ENCODE measurements at regions of chr11 and their contacts with region 1.

Region 1: DNA sequence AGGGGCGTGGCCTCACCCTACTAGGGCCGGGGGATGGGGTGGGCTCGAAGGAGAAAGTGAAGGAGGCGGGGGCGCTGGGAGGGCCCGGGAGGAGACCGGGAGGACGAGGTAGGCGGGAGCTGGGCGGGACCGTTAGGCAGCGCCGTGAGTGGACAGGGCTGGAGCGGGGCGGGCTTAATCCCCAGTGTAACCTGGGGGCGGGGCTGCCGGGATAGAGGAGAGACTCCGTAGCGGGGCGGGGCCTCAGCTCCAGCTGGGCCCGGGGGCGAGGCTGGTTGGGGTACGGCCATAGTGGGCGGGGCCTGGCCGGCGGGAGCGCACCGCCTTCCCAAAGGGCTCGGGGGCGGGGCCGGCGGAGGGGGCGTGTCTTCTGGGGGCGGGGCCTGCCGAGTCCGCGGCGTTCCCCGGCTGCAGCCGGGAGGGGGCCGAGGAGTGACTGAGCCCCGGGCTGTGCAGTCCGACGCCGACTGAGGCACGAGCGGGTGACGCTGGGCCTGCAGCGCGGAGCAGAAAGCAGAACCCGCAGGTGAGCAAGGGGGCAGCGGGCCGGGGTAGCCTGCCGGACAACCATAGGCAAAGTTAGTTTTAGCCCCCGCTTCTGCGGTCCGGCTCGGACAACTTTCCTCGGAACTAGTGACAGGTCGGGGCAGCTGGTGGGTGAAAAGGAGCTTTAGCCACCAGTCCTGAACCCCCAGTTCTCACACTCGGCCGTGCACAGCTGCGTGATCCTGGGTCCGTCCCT is at the start of gene CD82:
- DNase-seq: peak; percentile 100
- H3K4me3 ChIP-seq: peak within 1 kb of the TSS; percentile 80
- H3K27ac ChIP-seq: peak within 1 kb of the TSS; percentile 99
- H3K4me1 ChIP-seq: peaks cover 28% of the 10 kb centered on the region
- H3K27me3 ChIP-seq: no peaks in the 10 kb centered on the region
- total RNA-seq, gene CD82: 4.8 and 9.9 TPM in 2 replicates

Region 2: GRCh38 chr11:44899959-44900358 is 334.6 kb after region 1 on chr11:
- in situ Hi-C with region 1: loop called (anchors 10 kb)
- DNase-seq: peak; percentile 57
- H3K4me3 ChIP-seq: no peak overlapping the region
- H3K27ac ChIP-seq: no peak overlapping the region
- H3K4me1 ChIP-seq: no peaks in the 10 kb centered on the region
- H3K27me3 ChIP-seq: peaks cover 26% of the 10 kb centered on the region